CD4-positive, alpha-beta memory T cell (primary cell): ENCODE measurements at regions of chr4 and their contacts with region 1.

Region 1: DNA sequence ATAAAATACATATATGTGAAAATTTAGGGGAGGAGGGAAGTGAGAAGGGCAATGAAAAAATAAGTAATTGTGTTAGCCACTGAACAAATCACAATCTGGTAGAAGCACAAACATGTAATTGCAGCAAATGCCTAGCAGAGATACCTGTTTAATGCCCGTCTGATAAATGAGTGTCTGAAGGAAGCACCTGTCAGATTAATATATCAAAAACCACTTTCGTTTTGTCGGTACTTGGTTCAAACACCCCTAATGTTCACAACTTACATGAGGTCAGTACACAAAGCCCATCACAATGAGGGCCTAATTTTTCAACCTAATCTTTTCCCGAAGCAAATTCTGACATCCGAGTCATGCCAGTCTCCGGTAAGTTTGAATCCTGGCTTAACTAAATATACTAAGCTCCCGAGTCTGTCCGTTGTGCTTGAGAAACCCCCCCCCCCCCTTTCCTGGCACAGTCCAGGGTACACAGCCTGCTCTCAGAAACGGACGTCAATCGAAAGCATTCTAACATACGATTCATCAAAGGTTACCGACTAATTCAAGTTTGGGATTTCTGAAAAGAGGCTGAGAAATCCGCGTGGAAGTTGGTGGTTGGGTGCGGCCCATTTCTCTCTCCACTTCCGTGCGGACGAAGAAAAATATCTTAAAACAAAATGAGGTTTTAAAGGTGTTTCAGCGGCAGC is 758 bp downstream of the SDAD1 start:
- DNase-seq: peak in 4 of 5 donors; percentile 3 to 14 (median 8)
- H3K4me3 ChIP-seq: peak overlapping the region; percentile 84 to 93
- H3K4me3 Mint-ChIP-seq: peak overlapping the region; percentile 95 to 98 (median 96)
- H3K27ac ChIP-seq: peak overlapping the region; percentile 70
- H3K27ac Mint-ChIP-seq: peak overlapping the region; percentile 92 to 97 (median 95)
- H3K4me1 ChIP-seq: peaks cover 53% of the 10 kb centered on the region
- H3K4me1 Mint-ChIP-seq: peaks cover 0 to 34% (median 20%) of the 10 kb centered on the region in 4 donors
- H3K27me3 ChIP-seq: no peaks in the 10 kb centered on the region
- H3K27me3 Mint-ChIP-seq: peaks cover 0 to 5% of the 10 kb centered on the region in 2 donors

Region 2: DNA sequence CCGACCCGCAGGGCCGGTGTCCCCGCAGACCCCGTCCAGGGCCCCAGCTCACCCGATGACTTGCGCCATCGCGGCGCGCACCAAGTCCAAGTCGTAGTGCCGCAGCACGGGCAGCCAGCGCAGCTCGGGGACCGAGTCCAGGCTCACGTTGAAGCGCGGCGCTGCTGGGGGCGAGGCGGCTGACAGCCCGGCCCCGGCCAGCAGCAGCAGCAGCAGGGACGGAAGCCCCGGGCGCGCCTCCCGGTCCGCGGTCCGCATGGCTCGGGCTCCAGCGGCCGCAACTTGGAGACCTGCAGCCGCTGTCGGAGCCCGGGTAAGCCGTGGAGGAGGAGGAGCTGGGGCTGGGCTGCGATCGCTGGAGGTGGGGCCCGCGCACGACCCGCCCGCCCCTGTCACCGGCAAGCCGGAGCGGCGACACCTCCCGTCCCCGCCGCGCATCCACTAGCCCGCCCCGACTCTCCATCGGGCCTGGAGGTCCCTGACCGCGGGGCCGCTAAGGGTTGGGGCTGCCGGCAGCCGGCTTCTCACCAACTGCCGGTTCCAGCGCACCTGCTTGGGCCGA is 49.2 kb before region 1 on chr4 and contains the start of gene NAAA:
- CTCF ChIA-PET with region 1: no interaction called
- POLR2A ChIA-PET with region 1: interaction called, 31 read pairs
- intact Hi-C with region 1: loop called (anchors 1 kb)
- DNase-seq: peak; percentile 73 to 84 (median 80)
- H3K4me3 ChIP-seq: peak within 1 kb of the TSS; percentile 80 to 98
- H3K4me3 Mint-ChIP-seq: peak within 1 kb of the TSS; percentile 97 to 99 (median 98)
- H3K27ac ChIP-seq: peak within 1 kb of the TSS; percentile 75
- H3K27ac Mint-ChIP-seq: peak within 1 kb of the TSS; percentile 96 to 98 (median 98)
- H3K4me1 ChIP-seq: peaks cover 19% of the 10 kb centered on the region
- H3K4me1 Mint-ChIP-seq: peaks cover 10 to 35% (median 19%) of the 10 kb centered on the region in 4 donors
- H3K27me3 ChIP-seq: no peaks in the 10 kb centered on the region
- H3K27me3 Mint-ChIP-seq: no peaks in the 10 kb centered on the region
- total RNA-seq, gene NAAA: 86.1 to 92.2 TPM